ENCODE measurements at regions of chr11 and their contacts with region 1.

Region 1: GRCh38 chr11:65382033-65382807 is at the start of gene SLC25A45:
- DNase-seq: peak; percentile 92
- ATAC-seq: peak; percentile 83
- H3K4me3 ChIP-seq: peak within 1 kb of the TSS; percentile 46 to 55
- H3K27ac ChIP-seq: peak within 1 kb of the TSS; percentile 99
- H3K4me1 ChIP-seq: peaks cover 55 to 69% of the 10 kb centered on the region in 2 experiments
- H3K27me3 ChIP-seq: no peaks in the 10 kb centered on the region
- CTCF ChIP-seq: peak in 2 of 3 experiments; percentile 63 to 75; a peak in 4 of 6 replicates
- POLR2A ChIP-seq: no peak
- RAD21 ChIP-seq: no peak
- total RNA-seq, gene SLC25A45: 3.9 TPM

Region 2: DNA sequence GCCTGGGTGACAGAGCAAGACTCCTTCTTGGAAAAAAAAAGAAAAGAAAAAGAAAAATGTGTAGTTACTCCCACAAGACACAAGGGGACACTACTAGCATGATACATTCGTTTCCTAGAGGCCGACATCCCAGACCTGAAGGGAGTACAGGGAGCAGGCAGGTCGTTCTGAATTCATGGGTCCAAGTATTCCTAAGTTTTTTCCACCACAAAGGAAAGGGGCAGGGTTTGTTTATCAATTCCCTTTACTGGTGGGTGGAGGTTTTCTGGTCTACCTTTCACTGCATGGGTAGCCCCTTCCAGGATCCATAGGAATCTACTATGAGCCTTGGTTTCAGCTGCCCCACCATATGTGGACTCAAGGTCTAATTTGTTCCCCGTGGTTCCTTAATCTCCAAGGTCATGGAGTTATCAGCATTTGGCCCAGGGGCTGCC is 15.9 kb before region 1 on chr11:
- CTCF ChIA-PET with region 1: no interaction called
- POLR2A ChIA-PET with region 1: no interaction called
- RAD21 ChIA-PET with region 1: no interaction called
- intact Hi-C with region 1: loop called (anchors 1 kb)
- DNase-seq: peak; percentile 67
- ATAC-seq: peak; percentile 90
- H3K4me3 ChIP-seq: no peak overlapping the region
- H3K27ac ChIP-seq: no peak overlapping the region
- H3K4me1 ChIP-seq: peaks cover 6 to 10% of the 10 kb centered on the region in 2 experiments; a peak in 3 of 4 replicates
- H3K27me3 ChIP-seq: no peaks in the 10 kb centered on the region
- CTCF ChIP-seq: peak; percentile 62 to 85 (median 66)
- POLR2A ChIP-seq: no peak
- RAD21 ChIP-seq: peak; percentile 95

Region 3: DNA sequence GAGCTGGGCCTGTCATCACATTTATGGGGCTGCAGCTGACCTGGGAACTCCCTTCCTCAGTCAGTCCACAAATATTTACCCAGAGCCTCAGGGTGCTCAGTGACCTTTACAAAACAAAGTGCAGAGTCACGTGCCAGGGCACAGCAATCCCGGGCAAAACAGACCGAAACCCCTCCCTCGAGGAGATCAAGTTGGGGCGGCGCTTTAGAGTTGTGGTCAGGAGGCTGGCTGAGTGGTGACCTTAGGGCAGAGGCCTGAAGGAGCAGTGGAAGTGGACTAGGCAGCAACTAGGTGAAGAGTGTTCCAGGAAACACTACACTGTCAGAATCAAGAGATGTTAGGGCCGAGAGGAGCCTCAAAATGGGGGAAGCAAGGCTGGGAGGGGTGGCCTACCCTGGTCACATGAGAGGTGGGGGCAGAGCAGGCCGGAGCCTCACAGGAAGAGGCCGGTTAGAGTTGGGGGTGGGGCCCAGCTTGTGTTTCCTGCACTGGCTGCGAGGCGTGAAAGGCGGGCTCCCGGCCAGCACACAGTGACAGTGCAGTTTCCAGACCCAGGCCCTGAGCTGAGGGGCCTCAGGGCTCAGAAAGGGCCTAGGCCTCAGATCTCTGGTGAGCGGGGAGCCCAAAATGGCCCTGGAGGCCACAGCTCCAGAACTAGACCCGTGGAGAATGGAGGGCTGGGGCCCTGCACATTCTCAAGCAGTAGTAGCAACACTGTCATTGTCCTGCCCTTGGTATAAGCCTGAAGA is 36.7 kb after region 1 on chr11:
- CTCF ChIA-PET with region 1: interaction called, 5 read pairs
- POLR2A ChIA-PET with region 1: interaction called, 12 read pairs
- RAD21 ChIA-PET with region 1: no interaction called
- intact Hi-C with region 1: loop called (anchors 2 kb)
- DNase-seq: peak; percentile 84
- ATAC-seq: peak; percentile 59
- H3K4me3 ChIP-seq: peak overlapping the region; percentile 40 to 56
- H3K27ac ChIP-seq: peak overlapping the region; percentile 100
- H3K4me1 ChIP-seq: peaks cover 53 to 84% of the 10 kb centered on the region in 2 experiments
- H3K27me3 ChIP-seq: no peaks in the 10 kb centered on the region
- CTCF ChIP-seq: no peak
- POLR2A ChIP-seq: peak; percentile 87
- RAD21 ChIP-seq: no peak

Region 4: GRCh38 chr11:65425105-65425970 is 43.1 kb after region 1 on chr11:
- CTCF ChIA-PET with region 1: no interaction called
- POLR2A ChIA-PET with region 1: interaction called, 12 read pairs
- RAD21 ChIA-PET with region 1: no interaction called
- intact Hi-C with region 1: loop called (anchors 2 kb)
- DNase-seq: peak; percentile 42
- ATAC-seq: no peak
- H3K4me3 ChIP-seq: peak overlapping the region; percentile 21 to 77
- H3K27ac ChIP-seq: peak overlapping the region; percentile 100
- H3K4me1 ChIP-seq: peaks cover 43 to 89% of the 10 kb centered on the region in 2 experiments
- H3K27me3 ChIP-seq: no peaks in the 10 kb centered on the region
- CTCF ChIP-seq: no peak
- POLR2A ChIP-seq: no peak
- RAD21 ChIP-seq: no peak

Region 5: GRCh38 chr11:65569973-65570918 is 188.0 kb after region 1 on chr11 and contains the start of gene ZNRD2:
- CTCF ChIA-PET with region 1: no interaction called
- POLR2A ChIA-PET with region 1: no interaction called
- RAD21 ChIA-PET with region 1: no interaction called
- intact Hi-C with region 1: loop called (anchors 5 kb)
- DNase-seq: peak; percentile 97
- ATAC-seq: peak; percentile 72
- H3K4me3 ChIP-seq: peak within 1 kb of the TSS; percentile 97 to 100
- H3K27ac ChIP-seq: peak within 1 kb of the TSS; percentile 94
- H3K4me1 ChIP-seq: peaks cover 35 to 68% of the 10 kb centered on the region in 2 experiments
- H3K27me3 ChIP-seq: no peaks in the 10 kb centered on the region
- CTCF ChIP-seq: peak in 1 of 3 experiments; percentile 29; a peak in 2 of 6 replicates
- POLR2A ChIP-seq: peak; percentile 36
- RAD21 ChIP-seq: no peak
- total RNA-seq, gene ZNRD2: 66.8 TPM